Dorsolateral prefrontal cortex (tissue), 120 donors: ENCODE measurements at regions of chr10 and their contacts with region 1.

Region 1: DNA sequence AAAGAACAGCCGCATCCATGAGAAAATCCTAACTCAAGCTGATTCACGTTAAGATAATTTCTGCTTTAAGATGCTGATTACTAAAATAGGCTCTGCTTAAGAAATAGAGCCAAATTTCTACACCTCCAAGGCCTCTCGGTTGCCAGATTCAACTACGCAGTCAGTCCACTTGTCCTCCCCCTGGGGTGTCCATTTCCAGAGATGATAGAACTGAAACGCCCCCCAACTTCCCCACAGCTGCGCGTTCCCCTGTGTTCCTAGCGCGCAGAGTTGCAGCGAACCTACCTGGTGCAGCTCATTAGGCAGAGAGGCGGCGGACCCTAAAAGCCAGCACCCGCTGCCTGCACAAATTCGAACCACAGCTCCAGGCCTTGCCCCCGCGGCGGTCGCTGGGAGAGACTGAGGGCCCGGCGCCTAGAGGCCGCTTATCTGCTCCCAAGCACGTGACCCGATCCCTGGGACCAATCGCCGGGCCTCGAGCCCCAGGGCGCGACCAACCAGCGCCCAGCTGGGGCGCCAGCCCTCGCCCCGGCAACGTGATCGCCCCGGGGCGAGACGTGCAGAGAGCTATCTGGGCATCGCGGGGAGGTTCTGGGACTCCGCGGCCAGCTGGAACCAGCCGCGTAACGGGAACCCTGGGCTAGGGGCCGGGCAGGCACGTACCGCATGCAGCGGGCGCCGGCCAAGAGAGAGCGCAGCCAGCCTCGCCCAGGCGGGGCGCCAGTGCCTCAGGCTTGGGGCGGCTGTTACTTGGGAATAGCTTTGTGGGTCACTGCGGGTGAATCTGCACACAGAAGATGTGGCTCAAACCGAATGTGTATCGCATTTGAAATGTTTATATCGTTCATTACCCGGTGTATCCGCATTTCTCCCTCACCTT is at the start of gene PPP1R3C:
- DNase-seq: peak; percentile 85 to 96 (median 92)
- H3K4me3 ChIP-seq: peak within 1 kb of the TSS; percentile 51 to 93 (median 78)
- H3K27ac ChIP-seq: peak within 1 kb of the TSS in 58 of 59 donors; percentile 27 to 92 (median 78)
- H3K27me3 ChIP-seq: no peaks in the 10 kb centered on the region
- CTCF ChIP-seq: peak in 53 of 56 donors; percentile 12 to 74 (median 46)
- total RNA-seq, gene PPP1R3C: 20.8 to 122 (median 43.9) TPM

Region 2: DNA sequence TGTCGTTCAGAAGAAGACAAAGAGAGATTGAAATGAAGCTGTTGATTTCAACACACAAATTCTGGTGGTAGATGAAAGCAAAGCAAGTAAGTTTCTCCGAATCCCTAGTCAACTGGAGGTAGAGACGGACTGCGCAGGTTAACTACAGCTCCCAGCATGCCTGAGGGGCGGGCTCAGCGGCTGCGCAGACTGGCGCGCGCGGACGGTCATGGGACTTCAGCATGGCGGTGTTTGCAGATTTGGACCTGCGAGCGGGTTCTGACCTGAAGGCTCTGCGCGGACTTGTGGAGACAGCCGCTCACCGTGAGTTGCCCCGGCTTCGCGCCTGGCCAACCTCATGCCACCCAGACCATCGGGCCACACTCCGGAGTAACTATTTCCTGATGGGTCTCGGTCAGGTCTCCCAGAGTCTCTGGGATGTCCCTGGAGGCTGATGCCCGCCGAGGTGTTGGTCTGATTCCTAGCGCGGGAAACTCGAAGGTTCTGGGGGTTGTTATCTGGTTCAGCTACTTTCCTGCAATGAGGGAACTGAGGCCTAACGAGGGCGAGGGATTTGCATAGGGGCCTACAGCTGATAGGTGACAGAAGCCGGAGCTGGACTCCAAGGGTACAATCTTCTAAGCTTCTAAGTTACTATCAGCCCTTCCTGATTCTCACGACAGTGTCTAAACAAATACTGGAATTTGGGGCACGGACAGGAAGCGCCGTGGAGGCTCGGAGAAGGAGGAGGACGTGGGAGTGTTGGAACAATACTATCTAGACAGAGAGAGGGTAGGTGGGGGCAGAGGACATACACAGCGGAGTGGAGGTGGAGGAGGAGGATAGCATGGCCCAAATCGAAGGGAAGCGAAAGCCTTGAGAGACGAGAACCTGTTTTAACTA is 760.9 kb before region 1 on chr10 and contains the start of gene RPP30:
- intact Hi-C with region 1: loop called in 1 of 2 experiments (anchors 10 kb)
- DNase-seq: peak; percentile 83 to 94 (median 90)
- H3K4me3 ChIP-seq: peak within 1 kb of the TSS; percentile 45 to 100 (median 87)
- H3K27ac ChIP-seq: peak within 1 kb of the TSS in 56 of 59 donors; percentile 2 to 94 (median 77)
- H3K27me3 ChIP-seq: no peaks in the 10 kb centered on the region
- CTCF ChIP-seq: peak in 18 of 56 donors; percentile 2 to 42 (median 6)
- total RNA-seq, gene RPP30: 20.3 to 46.7 (median 34.9) TPM

Region 3: GRCh38 chr10:91389636-91390512 is 243.0 kb before region 1 on chr10:
- intact Hi-C with region 1: loop called (anchors 10 kb)
- DNase-seq: no peak
- H3K4me3 ChIP-seq: peak overlapping the region in 24 of 59 donors; percentile 3 to 49 (median 21)
- H3K27ac ChIP-seq: no peak overlapping the region
- H3K27me3 ChIP-seq: no peaks in the 10 kb centered on the region
- CTCF ChIP-seq: peak; percentile 52 to 86 (median 72)

Region 4: DNA sequence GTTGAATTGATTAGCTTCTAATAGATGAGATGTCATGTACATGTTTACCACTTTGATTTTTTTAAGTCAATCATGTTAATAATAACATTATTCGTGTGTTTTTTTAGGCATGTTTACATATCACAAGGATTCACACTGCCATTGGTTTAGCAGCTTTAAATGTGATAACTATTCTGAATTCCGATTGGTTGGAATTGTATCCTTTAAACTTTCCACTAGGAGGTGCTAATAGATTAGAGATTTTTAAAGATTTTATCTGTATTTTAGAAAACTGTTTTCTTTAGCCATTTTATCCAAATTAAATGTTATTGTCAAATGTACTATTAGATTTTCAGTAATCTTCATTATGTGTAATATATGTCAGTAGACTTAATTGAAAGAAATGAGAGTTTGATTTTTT is 139.6 kb before region 1 on chr10:
- intact Hi-C with region 1: loop called (anchors 5 kb)
- DNase-seq: no peak
- H3K4me3 ChIP-seq: no peak overlapping the region
- H3K27ac ChIP-seq: no peak overlapping the region
- H3K27me3 ChIP-seq: no peaks in the 10 kb centered on the region
- CTCF ChIP-seq: peak in 55 of 56 donors; percentile 17 to 82 (median 61)

Region 5: GRCh38 chr10:91797874-91798648 is 165.2 kb after region 1 on chr10 and contains the start of gene TNKS2:
- intact Hi-C with region 1: loop called in 1 of 2 experiments (anchors 10 kb)
- DNase-seq: peak; percentile 77 to 94 (median 87)
- H3K4me3 ChIP-seq: peak within 1 kb of the TSS; percentile 50 to 99 (median 92)
- H3K27ac ChIP-seq: peak within 1 kb of the TSS; percentile 52 to 99 (median 91)
- H3K27me3 ChIP-seq: no peaks in the 10 kb centered on the region
- CTCF ChIP-seq: peak in 38 of 56 donors; percentile 9 to 66 (median 30)
- total RNA-seq, gene TNKS2: 35.0 to 51.5 (median 43.0) TPM

Region 6: DNA sequence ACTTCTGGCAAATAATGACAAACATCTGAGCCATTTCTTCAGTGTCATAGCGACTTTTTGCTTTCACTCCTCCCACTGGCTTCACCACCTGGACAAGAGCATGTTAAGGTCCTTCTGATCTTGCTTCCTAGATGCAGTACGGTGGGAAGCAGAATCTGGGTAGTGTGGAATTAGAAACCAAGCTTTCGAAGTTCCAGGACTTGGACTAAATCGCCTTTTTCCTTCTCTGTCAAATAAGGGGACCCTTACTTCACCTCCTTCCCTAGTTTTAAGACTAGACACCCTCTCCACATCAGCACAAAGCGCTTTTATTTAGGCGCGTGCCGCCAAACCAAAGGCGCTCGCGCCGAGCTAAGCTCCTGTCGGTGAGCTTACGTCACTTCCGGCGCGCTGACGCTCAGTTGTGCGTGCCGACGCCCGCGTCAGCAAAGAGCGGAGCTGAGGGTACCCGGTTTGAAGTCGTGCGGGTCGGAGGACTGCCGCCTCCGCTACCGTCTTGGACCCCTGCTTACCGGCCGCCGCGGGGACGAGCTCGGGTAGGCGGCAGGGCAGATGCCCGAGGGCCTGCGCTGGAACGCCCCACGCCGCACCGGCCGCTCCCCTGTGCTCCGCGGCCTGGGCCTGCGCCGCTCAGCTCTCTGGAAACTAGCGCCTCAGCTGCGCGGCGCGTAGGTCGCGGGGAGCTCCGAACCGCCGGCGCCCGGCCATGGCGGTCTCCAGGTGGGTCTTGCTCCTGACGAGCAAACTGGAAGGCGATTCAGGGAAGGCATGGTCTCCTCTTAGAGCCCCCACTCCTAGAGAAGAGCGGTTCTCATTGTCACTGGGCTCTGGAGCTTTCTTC is 290.7 kb after region 1 on chr10 and contains the start of gene BTAF1:
- intact Hi-C with region 1: loop called in 1 of 2 experiments (anchors 5 kb)
- DNase-seq: peak; percentile 89 to 97 (median 94)
- H3K4me3 ChIP-seq: peak within 1 kb of the TSS; percentile 39 to 100 (median 91)
- H3K27ac ChIP-seq: peak within 1 kb of the TSS; percentile 56 to 99 (median 93)
- H3K27me3 ChIP-seq: no peaks in the 10 kb centered on the region
- CTCF ChIP-seq: peak in 33 of 56 donors; percentile 13 to 55 (median 31)
- total RNA-seq, gene BTAF1: 28.2 to 65.3 (median 40.9) TPM